Ascending aorta (tissue), 2 donors: ENCODE measurements at regions of chr14 and their contacts with region 1.

Region 1: GRCh38 chr14:60561845-60562746 is 53.1 kb downstream of the SIX6 start:
- DNase-seq: peak in 1 of 2 donors; percentile 78
- H3K4me3 ChIP-seq: no peak overlapping the region
- H3K27ac ChIP-seq: no peak overlapping the region
- H3K4me1 ChIP-seq: peaks cover 0 to 10% of the 10 kb centered on the region in 2 donors
- H3K27me3 ChIP-seq: no peaks in the 10 kb centered on the region
- CTCF ChIP-seq: peak; percentile 34 to 72 (median 66)

Region 2: GRCh38 chr14:60294411-60295069 is 267.6 kb before region 1 on chr14:
- intact Hi-C with region 1: no loop called
- DNase-seq: no peak
- H3K4me3 ChIP-seq: no peak overlapping the region
- H3K27ac ChIP-seq: no peak overlapping the region
- H3K4me1 ChIP-seq: no peaks in the 10 kb centered on the region
- H3K27me3 ChIP-seq: no peaks in the 10 kb centered on the region
- CTCF ChIP-seq: no peak

Region 3: GRCh38 chr14:60349663-60350365 is 212.3 kb before region 1 on chr14:
- intact Hi-C with region 1: loop called (anchors 2 kb)
- DNase-seq: no peak
- H3K4me3 ChIP-seq: peak overlapping the region in 1 of 2 donors; percentile 22
- H3K27ac ChIP-seq: no peak overlapping the region
- H3K4me1 ChIP-seq: no peaks in the 10 kb centered on the region
- H3K27me3 ChIP-seq: no peaks in the 10 kb centered on the region
- CTCF ChIP-seq: peak; percentile 20 to 72 (median 55)

Region 4: GRCh38 chr14:60724137-60724619 is 162.1 kb after region 1 on chr14 and contains the start of gene SIX4:
- intact Hi-C with region 1: no loop called
- DNase-seq: peak; percentile 16 to 83
- H3K4me3 ChIP-seq: peak within 1 kb of the TSS; percentile 75 to 76
- H3K27ac ChIP-seq: peak within 1 kb of the TSS; percentile 73 to 77
- H3K4me1 ChIP-seq: no peaks in the 10 kb centered on the region
- H3K27me3 ChIP-seq: no peaks in the 10 kb centered on the region
- CTCF ChIP-seq: no peak
- total RNA-seq, gene SIX4: 1.4 TPM

Region 5: DNA sequence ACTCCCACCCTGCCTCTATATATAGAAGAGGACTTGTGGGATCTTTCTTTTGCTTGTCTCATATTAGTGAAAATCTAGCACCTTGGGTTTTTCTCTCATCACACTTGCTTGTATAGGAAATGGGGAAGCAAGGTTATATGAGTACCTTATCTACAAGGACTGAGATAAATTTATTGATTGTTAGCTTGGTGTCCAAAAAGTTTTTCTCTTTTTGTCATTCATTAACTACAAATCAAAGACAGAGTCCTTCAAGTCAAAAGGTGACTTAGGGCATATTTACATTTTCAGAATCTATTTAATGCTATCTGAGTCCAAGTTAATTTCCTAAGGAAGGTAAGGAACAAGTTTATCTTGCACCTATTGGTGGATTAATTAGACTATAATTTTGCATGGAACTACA is 1292.8 kb after region 1 on chr14:
- intact Hi-C with region 1: no loop called
- DNase-seq: no peak
- H3K4me3 ChIP-seq: no peak overlapping the region
- H3K27ac ChIP-seq: no peak overlapping the region
- H3K4me1 ChIP-seq: no peaks in the 10 kb centered on the region
- H3K27me3 ChIP-seq: no peaks in the 10 kb centered on the region
- CTCF ChIP-seq: no peak